Aorta (tissue), 5 donors: ENCODE measurements at regions of chr15 and their contacts with region 1.

Region 1: GRCh38 chr15:88954431-88955277 is 41.5 kb upstream of the MFGE8 start:
- DNase-seq: peak; percentile 88 to 90
- ATAC-seq: peak; percentile 89
- H3K4me3 ChIP-seq: no peak overlapping the region
- H3K27ac ChIP-seq: peak overlapping the region in 1 of 2 donors; percentile 84
- H3K4me1 ChIP-seq: no peaks in the 10 kb centered on the region
- H3K27me3 ChIP-seq: no peaks in the 10 kb centered on the region

Region 2: GRCh38 chr15:88913017-88913849 is 41.4 kb before region 1 on chr15 and contains the start of gene MFGE8:
- intact Hi-C with region 1: loop called (anchors 5 kb)
- DNase-seq: peak; percentile 86 to 94
- ATAC-seq: peak; percentile 87
- H3K4me3 ChIP-seq: peak within 1 kb of the TSS; percentile 81 to 86
- H3K27ac ChIP-seq: peak within 1 kb of the TSS; percentile 80 to 93
- H3K4me1 ChIP-seq: no peaks in the 10 kb centered on the region
- H3K27me3 ChIP-seq: no peaks in the 10 kb centered on the region
- total RNA-seq, gene MFGE8: 1,647 to 2,143 TPM

Region 3: GRCh38 chr15:88918738-88919137 is 35.9 kb before region 1 on chr15:
- intact Hi-C with region 1: loop called (anchors 5 kb)
- DNase-seq: peak; percentile 87 to 92
- ATAC-seq: peak; percentile 77
- H3K4me3 ChIP-seq: no peak overlapping the region
- H3K27ac ChIP-seq: peak overlapping the region; percentile 16 to 83
- H3K4me1 ChIP-seq: no peaks in the 10 kb centered on the region
- H3K27me3 ChIP-seq: no peaks in the 10 kb centered on the region

Region 4: GRCh38 chr15:89003865-89004725 is 49.4 kb after region 1 on chr15:
- intact Hi-C with region 1: loop called in 1 of 2 experiments (anchors 5 kb)
- DNase-seq: peak; percentile 58 to 75
- ATAC-seq: peak; percentile 58
- H3K4me3 ChIP-seq: no peak overlapping the region
- H3K27ac ChIP-seq: no peak overlapping the region
- H3K4me1 ChIP-seq: no peaks in the 10 kb centered on the region
- H3K27me3 ChIP-seq: no peaks in the 10 kb centered on the region

Region 5: GRCh38 chr15:89112341-89112971 is 157.8 kb after region 1 on chr15:
- intact Hi-C with region 1: no loop called
- DNase-seq: peak; percentile 72 to 80
- ATAC-seq: peak; percentile 71
- H3K4me3 ChIP-seq: no peak overlapping the region
- H3K27ac ChIP-seq: peak overlapping the region; percentile 91 to 92
- H3K4me1 ChIP-seq: peaks cover 8 to 27% of the 10 kb centered on the region in 2 donors
- H3K27me3 ChIP-seq: no peaks in the 10 kb centered on the region